ENCODE measurements at regions of chr2 and their contacts with region 1.

Region 1: DNA sequence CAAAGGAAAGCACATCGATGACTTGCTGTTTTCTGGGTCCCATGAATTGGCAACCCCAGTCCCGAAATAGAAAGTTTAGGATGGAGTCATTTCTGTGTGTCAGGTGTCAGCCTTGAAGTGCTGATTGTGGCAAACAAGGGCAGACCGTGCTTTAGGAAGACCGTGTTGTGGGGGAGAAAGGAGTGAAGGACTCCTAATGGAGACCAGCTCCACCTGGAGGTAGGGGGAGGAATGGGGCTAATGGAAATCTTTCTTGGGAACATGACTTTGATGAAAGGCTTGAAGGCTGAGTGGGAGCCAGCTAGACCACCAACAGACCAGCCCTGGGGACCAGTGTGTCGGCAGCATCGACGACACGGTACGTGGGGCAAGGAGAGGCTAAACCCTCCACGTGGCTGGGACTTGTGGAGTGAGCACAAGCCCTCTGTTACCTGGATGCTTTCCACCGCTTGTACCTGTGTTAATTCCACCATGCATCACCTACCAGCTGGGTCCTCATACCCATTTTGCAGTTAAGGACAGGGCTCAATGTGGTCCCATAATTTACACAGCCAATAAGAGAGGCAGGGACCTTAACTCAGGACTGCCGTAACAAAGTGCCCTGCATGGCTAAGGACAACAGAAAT is 104.2 kb downstream of the SH3BP4 start:
- DNase-seq: peak; percentile 78
- ATAC-seq: peak; percentile 67
- H3K4me3 ChIP-seq: no peak overlapping the region
- H3K27ac ChIP-seq: no peak overlapping the region
- H3K4me1 ChIP-seq: no peaks in the 10 kb centered on the region
- H3K27me3 ChIP-seq: no peaks in the 10 kb centered on the region
- CTCF ChIP-seq: peak; percentile 91
- EP300 ChIP-seq: no peak; a peak in 1 of 4 replicates
- POLR2A ChIP-seq: peak; percentile 36 to 65; a peak in 2 of 4 replicates
- RAD21 ChIP-seq: peak; percentile 78

Region 2: GRCh38 chr2:234550511-234551107 is 505.4 kb before region 1 on chr2:
- CTCF ChIA-PET with region 1: interaction called, 11 read pairs
- POLR2A ChIA-PET with region 1: no interaction called
- in situ Hi-C with region 1: no loop called
- intact Hi-C with region 1: loop called (anchors 1 kb)
- DNase-seq: peak; percentile 73
- ATAC-seq: peak; percentile 88
- H3K4me3 ChIP-seq: no peak overlapping the region
- H3K27ac ChIP-seq: no peak overlapping the region
- H3K4me1 ChIP-seq: peaks cover 33% of the 10 kb centered on the region
- H3K27me3 ChIP-seq: peaks cover 2 to 33% of the 10 kb centered on the region in 2 experiments; a peak in 4 of 5 replicates
- CTCF ChIP-seq: peak; percentile 99
- EP300 ChIP-seq: no peak
- POLR2A ChIP-seq: no peak
- RAD21 ChIP-seq: peak; percentile 97

Region 3: DNA sequence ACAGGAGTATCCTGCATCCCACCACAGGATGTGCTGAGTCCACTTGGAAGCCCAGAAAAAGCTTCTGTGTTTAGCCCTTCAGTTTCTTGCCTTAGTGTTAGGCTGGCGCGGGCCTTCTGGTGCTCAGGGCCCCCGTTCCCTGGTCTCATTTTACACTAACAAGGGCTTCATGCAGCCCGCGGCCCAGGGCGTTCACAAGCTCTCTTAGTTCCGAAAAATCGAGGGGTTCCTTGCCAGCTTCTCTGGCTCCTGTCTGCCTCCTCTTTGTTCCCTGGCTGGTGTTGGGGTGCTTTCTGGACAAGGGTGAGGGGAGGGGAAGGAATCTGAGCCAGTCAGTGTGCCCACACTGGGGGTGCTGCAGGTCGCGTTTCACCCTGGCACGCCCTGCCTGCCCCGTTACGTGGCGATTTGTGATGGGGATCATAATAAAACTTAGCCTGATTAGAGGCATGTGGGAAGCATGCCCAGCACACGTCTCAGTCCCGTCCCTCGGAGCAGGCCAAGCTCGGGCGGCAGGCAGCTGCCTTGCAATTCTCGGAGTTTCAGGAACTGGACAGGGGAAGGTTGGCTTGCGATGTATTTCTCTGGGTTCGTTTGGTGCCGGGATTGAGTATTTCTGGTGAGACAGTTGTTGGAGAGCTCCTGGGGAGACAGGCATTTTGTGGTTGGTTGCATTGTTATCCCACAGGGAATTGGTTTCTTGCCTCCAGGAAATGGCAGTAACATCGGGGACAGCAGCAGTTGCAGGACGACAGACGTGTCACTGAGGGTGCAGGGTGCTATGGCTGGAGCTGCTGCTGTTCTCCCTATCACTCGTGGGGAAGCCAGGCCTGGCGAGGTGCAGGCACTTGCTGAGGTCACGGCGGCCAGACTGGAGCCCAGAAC is 81.3 kb before region 1 on chr2:
- CTCF ChIA-PET with region 1: no interaction called
- POLR2A ChIA-PET with region 1: interaction called, 3 read pairs
- in situ Hi-C with region 1: no loop called
- intact Hi-C with region 1: loop called (anchors 5 kb)
- DNase-seq: no peak
- ATAC-seq: no peak
- H3K4me3 ChIP-seq: no peak overlapping the region
- H3K27ac ChIP-seq: no peak overlapping the region
- H3K4me1 ChIP-seq: peaks cover 82% of the 10 kb centered on the region
- H3K27me3 ChIP-seq: no peaks in the 10 kb centered on the region
- CTCF ChIP-seq: no peak
- EP300 ChIP-seq: no peak
- POLR2A ChIP-seq: no peak
- RAD21 ChIP-seq: no peak

Region 4: GRCh38 chr2:235005603-235006259 is 50.3 kb before region 1 on chr2:
- CTCF ChIA-PET with region 1: no interaction called
- POLR2A ChIA-PET with region 1: interaction called, 3 read pairs
- in situ Hi-C with region 1: no loop called
- intact Hi-C with region 1: loop called (anchors 5 kb)
- DNase-seq: peak; percentile 98
- ATAC-seq: peak; percentile 88
- H3K4me3 ChIP-seq: peak overlapping the region in 1 of 3 experiments; percentile 29; a peak in 2 of 6 replicates
- H3K27ac ChIP-seq: peak overlapping the region; percentile 70
- H3K4me1 ChIP-seq: peaks cover 84% of the 10 kb centered on the region
- H3K27me3 ChIP-seq: no peaks in the 10 kb centered on the region
- CTCF ChIP-seq: peak; percentile 83
- EP300 ChIP-seq: peak; percentile 70 to 88; a peak in 3 of 4 replicates
- POLR2A ChIP-seq: no peak
- RAD21 ChIP-seq: peak; percentile 83

Measured in HepG2 (cell line).